B cell (primary cell): ENCODE measurements at regions of chr1 and their contacts with region 1.

Region 1: GRCh38 chr1:248825909-248826760 is at the start of gene SH3BP5L:
- DNase-seq: peak; percentile 98
- ATAC-seq: peak; percentile 84
- H3K4me3 ChIP-seq: peak within 1 kb of the TSS; percentile 86 to 99 (median 93)
- H3K4me3 Mint-ChIP-seq: peak within 1 kb of the TSS; percentile 95
- H3K27ac ChIP-seq: peak within 1 kb of the TSS; percentile 98
- H3K27ac Mint-ChIP-seq: peak within 1 kb of the TSS; percentile 96
- H3K4me1 ChIP-seq: peaks cover 52 to 54% of the 10 kb centered on the region in 2 donors
- H3K4me1 Mint-ChIP-seq: peaks cover 57% of the 10 kb centered on the region
- H3K27me3 ChIP-seq: no peaks in the 10 kb centered on the region
- H3K27me3 Mint-ChIP-seq: no peaks in the 10 kb centered on the region
- CTCF ChIP-seq: peak; percentile 84
- total RNA-seq, gene SH3BP5L: 35.7 and 36.5 TPM in 2 replicates

Region 2: GRCh38 chr1:248906009-248906752 is 80.0 kb after region 1 on chr1 and contains the start of gene PGBD2:
- CTCF ChIA-PET with region 1: no interaction called
- POLR2A ChIA-PET with region 1: interaction called, 10 read pairs
- intact Hi-C with region 1: loop called (anchors 1 kb)
- DNase-seq: peak; percentile 96
- ATAC-seq: peak; percentile 84
- H3K4me3 ChIP-seq: peak within 1 kb of the TSS; percentile 69 to 84 (median 71)
- H3K4me3 Mint-ChIP-seq: peak within 1 kb of the TSS; percentile 94
- H3K27ac ChIP-seq: peak within 1 kb of the TSS; percentile 78 to 94
- H3K27ac Mint-ChIP-seq: peak within 1 kb of the TSS; percentile 97
- H3K4me1 ChIP-seq: peaks cover 15 to 20% of the 10 kb centered on the region in 2 donors
- H3K4me1 Mint-ChIP-seq: peaks cover 47% of the 10 kb centered on the region
- H3K27me3 ChIP-seq: no peaks in the 10 kb centered on the region
- H3K27me3 Mint-ChIP-seq: no peaks in the 10 kb centered on the region
- CTCF ChIP-seq: peak; percentile 66
- total RNA-seq, gene PGBD2: 27.7 and 29.2 TPM in 2 replicates